Gastrocnemius medialis (tissue), 4 donors: ENCODE measurements at regions of chr19 and their contacts with region 1.

Region 1: GRCh38 chr19:18469069-18469846 is 31.3 kb upstream of the ISYNA1 start:
- DNase-seq: peak in 1 of 2 donors; percentile 74
- ATAC-seq: peak; percentile 25 to 42
- H3K4me3 ChIP-seq: no peak overlapping the region
- H3K27ac ChIP-seq: peak overlapping the region; percentile 89 to 96 (median 94)
- H3K4me1 ChIP-seq: peaks cover 73 to 83% of the 10 kb centered on the region in 2 donors
- H3K27me3 ChIP-seq: no peaks in the 10 kb centered on the region
- CTCF ChIP-seq: peak; percentile 77 to 94 (median 85)
- POLR2A ChIP-seq: no peak

Region 2: GRCh38 chr19:18503971-18504885 is 35.0 kb after region 1 on chr19:
- in situ Hi-C with region 1: no loop called
- intact Hi-C with region 1: loop called (anchors 1 kb)
- DNase-seq: no peak
- ATAC-seq: no peak
- H3K4me3 ChIP-seq: no peak overlapping the region
- H3K27ac ChIP-seq: peak overlapping the region; percentile 94 to 99 (median 98)
- H3K4me1 ChIP-seq: peaks cover 100% of the 10 kb centered on the region in 2 donors
- H3K27me3 ChIP-seq: no peaks in the 10 kb centered on the region
- CTCF ChIP-seq: no peak
- POLR2A ChIP-seq: no peak

Region 3: DNA sequence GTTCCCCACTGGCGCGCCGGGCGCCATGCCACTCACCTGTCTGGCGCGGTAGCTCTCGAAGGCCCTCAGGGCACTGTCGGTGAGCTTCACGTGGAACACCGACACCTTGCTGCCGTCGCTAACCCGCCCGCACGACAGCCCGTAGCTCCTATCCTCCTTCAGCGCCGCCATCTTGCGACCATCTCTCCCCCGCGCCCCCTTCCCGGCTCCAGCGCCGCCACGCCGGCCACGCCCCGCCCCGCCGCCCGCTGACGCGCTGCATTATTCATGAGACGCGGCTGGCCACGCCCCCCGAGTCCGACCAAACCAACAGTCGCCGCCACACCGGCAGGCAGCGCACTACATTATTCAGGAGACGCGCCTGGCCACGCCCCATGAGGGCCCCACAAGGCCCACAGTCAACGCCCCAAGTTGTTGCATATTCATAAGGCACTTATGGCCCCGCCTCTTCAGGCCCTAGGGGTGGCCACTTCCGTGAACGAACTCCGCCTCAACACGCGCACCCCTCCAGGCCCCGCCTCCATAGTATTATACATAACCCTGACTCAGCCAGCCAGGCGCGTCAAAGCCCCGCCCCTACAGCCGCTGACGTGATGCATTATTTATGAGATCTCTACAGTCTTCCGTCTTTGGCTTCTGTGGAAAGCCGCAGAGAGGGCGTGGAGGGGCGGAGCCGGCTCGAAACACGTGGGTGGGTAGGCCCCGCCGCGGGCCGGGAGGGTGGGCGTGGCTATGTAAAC is 52.8 kb after region 1 on chr19 and contains the start of gene ELL:
- in situ Hi-C with region 1: loop called in 2 of 4 experiments (anchors 5 kb)
- intact Hi-C with region 1: loop called (anchors 2 kb)
- DNase-seq: peak; percentile 100
- ATAC-seq: peak; percentile 73 to 74
- H3K4me3 ChIP-seq: peak within 1 kb of the TSS; percentile 85 to 99 (median 95)
- H3K27ac ChIP-seq: peak within 1 kb of the TSS; percentile 97 to 100 (median 98)
- H3K4me1 ChIP-seq: peaks cover 27 to 31% of the 10 kb centered on the region in 2 donors
- H3K27me3 ChIP-seq: no peaks in the 10 kb centered on the region
- CTCF ChIP-seq: peak in 1 of 5 experiments; percentile 40
- POLR2A ChIP-seq: peak; percentile 99
- total RNA-seq, gene ELL: 21.8 to 30.8 (median 27.3) TPM

Region 4: DNA sequence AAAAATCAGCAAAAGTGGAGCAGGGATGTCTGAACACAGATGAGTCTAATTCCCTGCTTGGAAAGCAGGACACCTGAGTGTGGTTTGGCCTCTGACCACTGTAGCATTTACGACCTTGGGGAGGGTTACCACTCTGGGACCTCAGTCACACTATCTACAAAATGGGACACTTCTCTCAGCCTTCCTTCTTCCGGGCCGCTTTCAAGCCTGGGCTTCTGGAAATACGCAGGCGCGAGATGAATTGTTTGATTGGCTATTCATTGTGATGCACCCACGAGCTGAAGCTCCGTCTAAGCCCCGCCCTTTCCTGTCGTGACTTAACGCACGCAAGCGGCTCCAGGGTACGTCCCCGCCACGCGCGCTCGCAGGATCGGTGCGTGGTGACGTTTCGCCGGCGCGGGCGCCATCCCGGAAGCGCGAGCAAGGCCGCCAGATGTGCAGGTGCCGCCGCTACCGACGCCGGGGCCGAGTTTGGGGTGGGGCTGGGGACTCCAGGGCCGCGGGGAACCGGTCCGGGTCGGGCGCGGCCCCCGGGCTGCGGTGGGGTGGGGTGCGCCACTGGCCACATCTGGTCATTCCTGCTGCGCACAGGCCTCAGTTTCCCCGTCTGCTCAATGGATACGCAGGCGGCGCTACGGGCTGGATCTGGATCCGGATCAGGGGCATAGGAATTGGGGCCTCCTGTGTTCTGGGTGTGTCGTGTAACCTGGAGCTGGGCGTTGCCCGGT is 88.4 kb after region 1 on chr19 and contains the start of gene KXD1:
- in situ Hi-C with region 1: loop called in 1 of 4 experiments (anchors 25 kb)
- intact Hi-C with region 1: loop called (anchors 5 kb)
- DNase-seq: peak; percentile 98
- ATAC-seq: peak; percentile 99 to 100
- H3K4me3 ChIP-seq: peak within 1 kb of the TSS; percentile 82 to 91 (median 88)
- H3K27ac ChIP-seq: peak within 1 kb of the TSS; percentile 95 to 98 (median 96)
- H3K4me1 ChIP-seq: peaks cover 0 to 17% of the 10 kb centered on the region in 2 donors
- H3K27me3 ChIP-seq: no peaks in the 10 kb centered on the region
- CTCF ChIP-seq: no peak
- POLR2A ChIP-seq: peak; percentile 86 to 92
- total RNA-seq, gene KXD1: 97.1 to 155 (median 106) TPM

Region 5: DNA sequence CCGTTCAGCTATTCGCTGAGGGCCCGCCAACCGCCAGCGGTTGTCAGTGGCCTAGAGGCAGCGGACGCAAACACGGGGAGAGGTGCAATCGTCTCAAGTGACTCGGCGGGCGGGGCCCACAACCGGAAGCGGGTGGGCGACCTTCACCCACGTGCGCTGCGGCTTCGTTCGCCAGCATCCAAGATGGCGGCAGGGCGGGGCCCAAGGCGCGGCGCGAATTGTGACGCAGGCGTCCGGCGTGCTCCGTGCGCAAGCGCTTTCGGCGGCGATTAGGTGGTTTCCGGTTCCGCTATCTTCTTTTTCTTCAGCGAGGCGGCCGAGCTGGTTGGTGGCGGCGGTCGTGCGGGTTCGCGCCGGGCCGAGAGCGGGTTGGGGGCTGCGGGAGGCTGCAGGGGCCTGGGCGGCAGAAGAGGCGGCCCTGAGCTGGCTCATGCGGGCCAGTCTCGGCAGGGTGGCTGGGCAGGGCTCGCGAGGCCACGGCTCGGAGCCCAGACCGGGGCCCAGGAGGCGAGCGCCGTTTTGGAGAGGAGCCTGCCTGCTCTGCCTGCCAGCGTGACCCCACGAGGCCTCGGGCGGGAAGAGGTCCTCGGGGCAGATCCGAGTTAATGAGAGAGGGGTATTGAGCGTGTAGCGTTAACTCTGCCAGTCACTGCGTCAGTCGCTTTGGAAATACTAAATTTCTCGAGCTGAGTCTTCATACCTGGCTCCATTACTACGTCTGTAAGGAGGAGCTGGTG is 102.5 kb after region 1 on chr19 and contains the start of gene UBA52:
- in situ Hi-C with region 1: loop called in 2 of 4 experiments (anchors 10 to 25 kb)
- intact Hi-C with region 1: loop called (anchors 5 kb)
- DNase-seq: peak; percentile 97 to 98
- ATAC-seq: peak; percentile 94 to 95
- H3K4me3 ChIP-seq: peak within 1 kb of the TSS; percentile 78 to 90 (median 82)
- H3K27ac ChIP-seq: peak within 1 kb of the TSS; percentile 88 to 98 (median 94)
- H3K4me1 ChIP-seq: peaks cover 10 to 16% of the 10 kb centered on the region in 2 donors
- H3K27me3 ChIP-seq: no peaks in the 10 kb centered on the region
- CTCF ChIP-seq: peak in 1 of 5 experiments; percentile 6
- POLR2A ChIP-seq: peak; percentile 95 to 98
- total RNA-seq, gene UBA52: 512 to 719 (median 537) TPM

Region 6: GRCh38 chr19:18675779-18676178 is 206.5 kb after region 1 on chr19:
- in situ Hi-C with region 1: loop called in 1 of 4 experiments (anchors 25 kb)
- intact Hi-C with region 1: loop called (anchors 5 kb)
- DNase-seq: no peak
- ATAC-seq: no peak
- H3K4me3 ChIP-seq: no peak overlapping the region
- H3K27ac ChIP-seq: no peak overlapping the region
- H3K4me1 ChIP-seq: peaks cover 29 to 57% of the 10 kb centered on the region in 2 donors
- H3K27me3 ChIP-seq: no peaks in the 10 kb centered on the region
- CTCF ChIP-seq: peak in 4 of 5 experiments; percentile 13 to 55 (median 25)
- POLR2A ChIP-seq: no peak